PC-3 (cell line): ENCODE measurements at regions of chr9 and their contacts with region 1.

Region 1: GRCh38 chr9:131807144-131807983 is 67.5 kb upstream of the RAPGEF1 start:
- DNase-seq: no peak
- ATAC-seq: no peak
- H3K4me3 ChIP-seq: no peak overlapping the region
- H3K27ac ChIP-seq: no peak overlapping the region
- H3K4me1 ChIP-seq: peaks cover 11% of the 10 kb centered on the region
- H3K27me3 ChIP-seq: 0 out of 2 replicates have a peak, but pooled peaks cover 4% of the 10 kb centered on the region
- CTCF ChIP-seq: no peak

Region 2: DNA sequence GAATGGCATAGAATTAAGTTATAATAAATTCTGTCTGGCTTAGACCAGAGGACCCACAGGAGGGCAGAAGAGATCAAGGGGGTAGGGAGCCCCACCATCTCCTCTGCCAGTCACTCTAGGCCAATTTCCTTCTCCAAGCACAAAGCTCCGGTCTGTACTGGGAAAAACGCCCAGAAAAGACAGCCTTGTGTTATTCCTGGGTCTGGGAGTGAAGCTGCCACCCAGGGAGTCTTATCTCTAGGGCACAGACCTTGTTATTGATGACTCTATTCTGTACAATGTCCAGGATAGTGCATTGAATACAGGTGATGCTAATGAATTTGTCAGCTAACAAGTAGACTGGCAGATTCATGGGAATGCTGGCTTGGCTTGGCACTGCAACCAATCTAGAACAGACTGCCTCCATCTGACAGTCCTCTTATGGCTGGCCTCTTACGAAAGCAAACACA is 211.6 kb after region 1 on chr9:
- CTCF ChIA-PET with region 1: no interaction called
- POLR2A ChIA-PET with region 1: no interaction called
- intact Hi-C with region 1: no loop called
- DNase-seq: no peak
- ATAC-seq: no peak
- H3K4me3 ChIP-seq: no peak overlapping the region
- H3K27ac ChIP-seq: no peak overlapping the region
- H3K4me1 ChIP-seq: peaks cover 12% of the 10 kb centered on the region; the same call in 1 of the 2 replicates
- H3K27me3 ChIP-seq: no peaks in the 10 kb centered on the region
- CTCF ChIP-seq: no peak

Region 3: GRCh38 chr9:132039284-132039683 is 231.9 kb after region 1 on chr9:
- CTCF ChIA-PET with region 1: no interaction called
- POLR2A ChIA-PET with region 1: interaction called, 15 read pairs
- intact Hi-C with region 1: no loop called
- DNase-seq: no peak
- ATAC-seq: no peak
- H3K4me3 ChIP-seq: no peak overlapping the region
- H3K27ac ChIP-seq: no peak overlapping the region
- H3K4me1 ChIP-seq: peaks cover 25% of the 10 kb centered on the region
- H3K27me3 ChIP-seq: no peaks in the 10 kb centered on the region
- CTCF ChIP-seq: no peak